ENCODE measurements at regions of chr10 and their contacts with region 1.

Region 1: DNA sequence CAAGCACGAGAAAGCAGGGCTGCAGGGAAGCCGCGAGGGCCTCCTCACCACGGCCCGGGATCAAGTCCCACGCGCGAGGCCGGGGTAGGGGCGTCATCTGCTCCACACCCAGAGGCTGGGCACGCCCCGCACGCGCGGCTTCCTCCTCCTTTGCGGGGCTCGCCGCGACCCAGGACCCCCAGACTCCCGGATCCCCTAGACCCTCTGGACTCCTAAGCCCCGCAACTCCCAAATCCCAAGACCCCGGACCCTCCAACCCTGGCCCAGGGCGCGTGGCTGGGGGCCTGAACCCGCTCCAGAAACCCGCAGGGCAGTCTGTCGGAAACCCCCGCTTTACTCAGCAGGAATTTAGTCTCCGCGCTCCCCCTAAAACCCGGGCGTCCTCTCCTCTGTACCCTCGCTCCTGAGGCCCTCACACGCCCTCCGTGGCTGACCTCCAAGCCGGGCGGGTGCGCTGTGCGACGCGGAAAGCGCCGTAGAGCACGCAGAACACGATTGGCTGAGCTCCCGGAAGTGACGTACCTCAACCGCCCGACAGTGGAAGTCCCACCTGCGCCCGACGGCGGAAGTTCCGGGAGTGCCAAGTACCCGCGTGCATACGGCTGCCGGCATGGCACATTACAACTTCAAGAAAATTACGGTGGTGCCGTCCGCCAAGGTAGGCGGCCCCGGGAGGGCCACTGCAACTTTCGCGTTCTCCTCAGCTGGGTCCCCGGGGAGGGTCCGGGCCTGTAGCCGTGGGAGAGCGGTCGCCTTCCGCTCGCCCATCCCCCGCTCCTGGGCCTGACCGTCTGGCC is at the start of gene GTPBP4:
- DNase-seq: peak; percentile 95
- H3K4me3 ChIP-seq: peak within 1 kb of the TSS; percentile 76 to 94 (median 84)
- H3K27ac ChIP-seq: peak within 1 kb of the TSS; percentile 86
- H3K4me1 ChIP-seq: peaks cover 13% of the 10 kb centered on the region
- H3K27me3 ChIP-seq: no peaks in the 10 kb centered on the region
- CTCF ChIP-seq: no peak
- POLR2A ChIP-seq: peak; percentile 33
- total RNA-seq, gene GTPBP4: 68.9 and 69.3 TPM in 2 replicates

Region 2: GRCh38 chr10:931416-932318 is 56.4 kb before region 1 on chr10 and contains the start of gene LARP4B:
- CTCF ChIA-PET with region 1: no interaction called
- POLR2A ChIA-PET with region 1: interaction called, 5 read pairs
- dilution Hi-C with region 1: no loop called
- intact Hi-C with region 1: loop called (anchors 2 kb)
- DNase-seq: peak; percentile 98
- H3K4me3 ChIP-seq: peak within 1 kb of the TSS; percentile 28 to 82 (median 77)
- H3K27ac ChIP-seq: peak within 1 kb of the TSS; percentile 67
- H3K4me1 ChIP-seq: peaks cover 12% of the 10 kb centered on the region
- H3K27me3 ChIP-seq: no peaks in the 10 kb centered on the region
- CTCF ChIP-seq: no peak
- POLR2A ChIP-seq: peak; percentile 36
- total RNA-seq, gene LARP4B: 101 TPM in 2 replicates

Region 3: DNA sequence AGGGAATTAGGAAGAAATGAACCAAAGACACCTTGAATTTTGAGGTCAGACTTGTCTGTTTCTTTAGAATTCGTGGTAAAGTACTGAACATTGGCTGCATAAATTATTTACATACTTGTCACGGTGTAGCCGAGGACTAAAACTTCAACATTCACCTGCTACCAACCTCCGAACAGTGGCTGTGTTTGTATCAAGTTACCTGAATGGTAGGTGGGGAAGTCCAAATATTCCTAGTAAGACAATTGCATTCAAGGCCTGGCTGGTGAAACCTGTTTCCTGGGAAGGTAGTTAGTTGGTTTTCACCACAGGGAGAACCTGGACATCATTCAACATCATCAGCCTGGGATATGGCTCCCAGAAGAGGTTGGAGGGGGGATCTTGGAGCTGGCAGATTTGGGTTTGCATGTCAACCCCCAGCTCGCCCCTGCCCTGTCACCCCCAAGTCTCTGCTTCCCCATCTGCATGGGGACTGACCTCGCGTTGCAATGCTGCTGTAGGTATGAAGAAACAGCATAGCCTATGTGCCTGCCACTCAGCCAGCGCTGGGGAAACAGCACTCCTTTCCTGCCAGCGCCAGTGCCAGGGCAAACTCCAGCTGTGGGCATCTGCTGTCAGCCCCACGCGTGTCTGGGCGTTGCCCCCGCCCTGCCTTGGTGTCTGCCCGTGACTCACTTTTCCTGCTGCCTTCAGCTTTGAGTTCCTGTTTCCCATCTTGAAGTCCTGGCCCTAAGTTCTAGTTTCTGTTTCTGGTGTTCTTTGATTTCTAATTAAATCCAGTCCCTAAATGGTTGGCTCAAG is 43.8 kb before region 1 on chr10:
- CTCF ChIA-PET with region 1: no interaction called
- POLR2A ChIA-PET with region 1: no interaction called
- dilution Hi-C with region 1: no loop called
- intact Hi-C with region 1: loop called (anchors 1 kb)
- DNase-seq: peak; percentile 88
- H3K4me3 ChIP-seq: peak overlapping the region in 1 of 3 experiments; percentile 54
- H3K27ac ChIP-seq: peak overlapping the region; percentile 63
- H3K4me1 ChIP-seq: peaks cover 8% of the 10 kb centered on the region
- H3K27me3 ChIP-seq: no peaks in the 10 kb centered on the region
- CTCF ChIP-seq: no peak
- POLR2A ChIP-seq: no peak

Region 4: DNA sequence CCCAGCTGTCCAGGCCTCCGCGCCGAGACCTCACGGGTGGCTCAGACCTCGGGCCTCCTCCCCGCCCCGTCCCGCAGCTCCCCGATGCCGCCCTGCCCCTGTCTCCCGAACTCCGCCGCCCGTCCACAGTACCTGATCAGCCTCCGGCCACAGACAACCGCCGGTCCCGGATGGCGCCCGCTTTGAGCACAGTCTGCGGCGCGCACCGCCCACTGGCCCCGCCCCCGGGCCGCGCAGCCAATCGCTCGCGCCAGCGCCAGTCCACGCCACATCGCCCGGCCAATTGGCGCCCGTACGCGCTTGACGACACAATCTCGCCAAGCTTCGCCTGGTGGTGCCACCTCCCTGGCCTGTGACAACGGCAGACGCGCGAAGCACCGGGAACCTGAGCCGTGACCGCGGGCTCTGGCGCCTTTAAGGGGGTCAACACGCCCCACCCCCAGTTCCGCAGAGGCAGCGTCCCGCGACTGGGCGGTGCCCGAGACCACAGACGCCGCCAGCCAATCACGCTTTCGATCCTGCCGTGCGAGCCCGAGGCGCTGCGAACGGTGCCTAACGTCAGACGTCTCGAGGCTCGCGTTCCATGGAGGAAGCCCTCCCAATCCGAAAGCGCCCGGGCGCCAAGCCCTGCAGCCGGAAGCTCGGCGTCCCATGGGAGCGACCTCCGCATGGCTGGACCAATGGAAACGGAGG is 60.8 kb after region 1 on chr10 and contains the start of gene IDI1:
- CTCF ChIA-PET with region 1: no interaction called
- POLR2A ChIA-PET with region 1: interaction called, 4 read pairs
- dilution Hi-C with region 1: no loop called
- intact Hi-C with region 1: loop called (anchors 5 kb)
- DNase-seq: peak; percentile 98
- H3K4me3 ChIP-seq: peak within 1 kb of the TSS; percentile 60 to 96 (median 86)
- H3K27ac ChIP-seq: peak within 1 kb of the TSS; percentile 74
- H3K4me1 ChIP-seq: peaks cover 39% of the 10 kb centered on the region
- H3K27me3 ChIP-seq: no peaks in the 10 kb centered on the region
- CTCF ChIP-seq: no peak
- POLR2A ChIP-seq: peak; percentile 80
- total RNA-seq, gene IDI1: 63.0 and 63.6 TPM in 2 replicates